ENCODE measurements at regions of chr17 and their contacts with region 1.

Region 1: DNA sequence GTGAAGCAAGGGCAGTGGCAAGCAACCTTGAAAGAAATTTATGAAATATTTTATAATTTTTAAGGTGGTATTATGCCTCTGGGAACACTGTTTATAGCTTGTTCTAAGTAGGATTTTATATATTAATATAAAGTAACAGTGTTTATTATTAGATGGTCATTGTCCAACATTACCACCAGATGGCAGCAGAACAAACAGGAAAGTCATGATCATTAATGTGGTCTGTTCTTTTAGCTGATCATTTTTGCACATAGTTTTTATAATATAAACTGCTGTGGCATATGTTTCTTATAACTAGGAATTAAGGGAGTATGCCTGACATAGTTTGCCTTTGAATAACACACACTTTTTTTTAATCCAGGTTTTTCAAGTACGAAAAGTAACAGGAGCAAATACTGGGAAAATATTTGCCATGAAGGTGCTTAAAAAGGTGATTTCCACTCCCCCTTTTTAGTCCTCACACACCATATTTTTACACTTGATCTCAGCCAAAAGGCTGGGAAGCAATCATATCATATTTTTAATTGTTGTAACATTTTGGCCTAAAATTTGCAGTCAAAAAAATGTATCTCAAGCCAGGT is 21.4 kb downstream of the RPS6KB1 start:
- DNase-seq: peak; percentile 19
- ATAC-seq: peak; percentile 72
- H3K4me3 ChIP-seq: no peak overlapping the region
- H3K27ac ChIP-seq: no peak overlapping the region
- H3K4me1 ChIP-seq: no peaks in the 10 kb centered on the region
- H3K27me3 ChIP-seq: no peaks in the 10 kb centered on the region
- CTCF ChIP-seq: peak; percentile 65 to 76 (median 71); a peak in 5 of 6 replicates
- POLR2A ChIP-seq: no peak
- RAD21 ChIP-seq: peak; percentile 74

Region 2: DNA sequence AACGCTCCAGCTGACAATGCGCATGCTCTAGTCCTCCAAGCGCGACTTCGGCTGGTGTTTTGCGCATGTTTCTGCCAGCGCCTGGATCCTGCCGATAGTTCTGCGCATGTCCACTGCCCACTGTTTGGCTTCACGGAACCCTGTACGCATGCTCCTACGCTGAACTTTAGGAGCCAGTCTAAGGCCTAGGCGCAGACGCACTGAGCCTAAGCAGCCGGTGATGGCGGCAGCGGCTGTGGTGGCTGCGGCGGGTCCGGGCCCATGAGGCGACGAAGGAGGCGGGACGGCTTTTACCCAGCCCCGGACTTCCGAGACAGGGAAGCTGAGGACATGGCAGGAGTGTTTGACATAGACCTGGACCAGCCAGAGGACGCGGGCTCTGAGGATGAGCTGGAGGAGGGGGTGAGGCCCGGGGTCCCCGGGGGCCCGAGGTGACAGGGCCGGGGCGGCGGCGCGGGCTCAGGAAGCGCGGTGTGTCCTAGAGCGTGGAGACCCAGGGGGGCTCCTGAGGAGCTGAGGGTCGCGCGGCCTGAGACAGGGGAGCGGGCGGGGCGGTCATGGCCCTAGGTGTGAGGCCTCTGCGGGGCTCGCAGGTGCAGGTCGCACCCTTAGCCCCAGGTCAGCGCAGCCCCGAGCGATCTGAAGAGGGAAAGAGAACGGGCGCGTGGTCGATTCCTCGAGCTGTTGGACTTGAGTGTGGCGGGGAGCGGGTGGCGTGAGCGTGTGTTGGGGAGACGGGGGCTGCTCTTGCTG is 21.3 kb before region 1 on chr17 and contains the starts of genes RPS6KB1 and TUBD1:
- CTCF ChIA-PET with region 1: interaction called, 15 read pairs
- POLR2A ChIA-PET with region 1: interaction called, 4 read pairs
- RAD21 ChIA-PET with region 1: no interaction called
- intact Hi-C with region 1: no loop called
- DNase-seq: peak; percentile 100
- ATAC-seq: peak; percentile 96
- H3K4me3 ChIP-seq: peak within 1 kb of the TSS; percentile 83 to 84
- H3K27ac ChIP-seq: peak within 1 kb of the TSS; percentile 73
- H3K4me1 ChIP-seq: peaks cover 13 to 30% of the 10 kb centered on the region in 2 experiments
- H3K27me3 ChIP-seq: no peaks in the 10 kb centered on the region
- CTCF ChIP-seq: no peak
- POLR2A ChIP-seq: peak; percentile 97
- RAD21 ChIP-seq: no peak
- total RNA-seq, gene RPS6KB1: 75.7 TPM
- total RNA-seq, gene TUBD1: 13.0 TPM

Region 3: GRCh38 chr17:59903455-59903854 is 10.9 kb before region 1 on chr17:
- CTCF ChIA-PET with region 1: interaction called, 20 read pairs
- POLR2A ChIA-PET with region 1: no interaction called
- RAD21 ChIA-PET with region 1: no interaction called
- intact Hi-C with region 1: no loop called
- DNase-seq: no peak
- ATAC-seq: no peak
- H3K4me3 ChIP-seq: no peak overlapping the region
- H3K27ac ChIP-seq: no peak overlapping the region
- H3K4me1 ChIP-seq: no peaks in the 10 kb centered on the region
- H3K27me3 ChIP-seq: no peaks in the 10 kb centered on the region
- CTCF ChIP-seq: no peak
- POLR2A ChIP-seq: no peak
- RAD21 ChIP-seq: no peak

Region 4: DNA sequence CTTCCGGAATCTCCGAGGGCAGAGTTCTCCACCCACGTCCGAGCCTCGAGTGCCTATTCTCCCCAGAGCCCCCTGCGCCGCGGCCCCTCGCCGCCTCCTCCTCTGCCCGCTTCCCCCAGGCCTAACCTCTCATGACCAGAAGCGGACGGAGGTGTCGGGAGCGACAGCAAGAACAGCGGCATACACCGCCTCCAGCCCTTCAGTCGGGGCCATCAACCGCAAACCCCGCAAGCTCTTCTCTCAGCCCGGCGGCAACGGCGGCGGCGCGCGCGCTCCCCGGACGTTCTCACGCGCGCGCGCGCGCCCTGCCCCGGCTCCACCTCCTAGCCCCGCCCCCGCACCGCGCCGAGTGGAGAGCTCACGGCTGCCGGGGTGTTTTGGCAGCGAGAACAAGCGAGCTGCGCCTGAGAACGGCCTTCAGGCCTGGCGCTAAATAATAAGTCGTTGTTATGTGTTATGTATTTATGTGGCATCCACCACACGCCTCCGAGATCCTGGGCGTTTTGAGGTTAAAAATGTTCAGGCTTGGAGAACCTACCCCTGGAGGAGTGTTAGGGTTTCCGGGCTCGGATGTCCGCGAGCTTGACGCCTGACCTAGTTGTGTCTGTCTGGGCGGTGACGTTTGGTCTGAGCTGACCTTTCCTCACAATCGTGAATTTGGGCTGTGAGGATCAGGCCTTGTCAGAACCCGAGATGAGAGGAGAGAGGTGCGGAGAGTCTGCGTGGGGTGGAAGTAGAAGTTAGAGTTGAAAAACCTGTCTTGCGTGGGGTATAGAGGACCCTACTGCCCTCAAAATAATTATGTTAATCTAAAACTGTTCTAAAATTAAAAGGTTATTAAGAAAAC is 50.3 kb after region 1 on chr17 and contains the start of gene RNFT1:
- CTCF ChIA-PET with region 1: interaction called, 12 read pairs
- POLR2A ChIA-PET with region 1: no interaction called
- RAD21 ChIA-PET with region 1: no interaction called
- intact Hi-C with region 1: no loop called
- DNase-seq: peak; percentile 72
- ATAC-seq: peak; percentile 89
- H3K4me3 ChIP-seq: peak within 1 kb of the TSS; percentile 90 to 93
- H3K27ac ChIP-seq: peak within 1 kb of the TSS; percentile 39
- H3K4me1 ChIP-seq: peaks cover 13 to 17% of the 10 kb centered on the region in 2 experiments; a peak in 3 of 4 replicates
- H3K27me3 ChIP-seq: no peaks in the 10 kb centered on the region
- CTCF ChIP-seq: no peak
- POLR2A ChIP-seq: peak; percentile 88
- RAD21 ChIP-seq: no peak
- total RNA-seq, gene RNFT1: 24.2 TPM

Measured in HCT116 (cell line).